Endothelial cell of umbilical vein (primary cell): ENCODE measurements at regions of chr4 and their contacts with region 1.

Region 1: GRCh38 chr4:15396157-15396800 is 31.6 kb upstream of the C1QTNF7 start:
- DNase-seq: peak; percentile 45
- H3K4me3 ChIP-seq: no peak overlapping the region
- H3K27ac ChIP-seq: no peak overlapping the region
- H3K4me1 ChIP-seq: no peaks in the 10 kb centered on the region
- H3K27me3 ChIP-seq: no peaks in the 10 kb centered on the region
- CTCF ChIP-seq: peak; percentile 50 to 67
- POLR2A ChIP-seq: no peak

Region 2: DNA sequence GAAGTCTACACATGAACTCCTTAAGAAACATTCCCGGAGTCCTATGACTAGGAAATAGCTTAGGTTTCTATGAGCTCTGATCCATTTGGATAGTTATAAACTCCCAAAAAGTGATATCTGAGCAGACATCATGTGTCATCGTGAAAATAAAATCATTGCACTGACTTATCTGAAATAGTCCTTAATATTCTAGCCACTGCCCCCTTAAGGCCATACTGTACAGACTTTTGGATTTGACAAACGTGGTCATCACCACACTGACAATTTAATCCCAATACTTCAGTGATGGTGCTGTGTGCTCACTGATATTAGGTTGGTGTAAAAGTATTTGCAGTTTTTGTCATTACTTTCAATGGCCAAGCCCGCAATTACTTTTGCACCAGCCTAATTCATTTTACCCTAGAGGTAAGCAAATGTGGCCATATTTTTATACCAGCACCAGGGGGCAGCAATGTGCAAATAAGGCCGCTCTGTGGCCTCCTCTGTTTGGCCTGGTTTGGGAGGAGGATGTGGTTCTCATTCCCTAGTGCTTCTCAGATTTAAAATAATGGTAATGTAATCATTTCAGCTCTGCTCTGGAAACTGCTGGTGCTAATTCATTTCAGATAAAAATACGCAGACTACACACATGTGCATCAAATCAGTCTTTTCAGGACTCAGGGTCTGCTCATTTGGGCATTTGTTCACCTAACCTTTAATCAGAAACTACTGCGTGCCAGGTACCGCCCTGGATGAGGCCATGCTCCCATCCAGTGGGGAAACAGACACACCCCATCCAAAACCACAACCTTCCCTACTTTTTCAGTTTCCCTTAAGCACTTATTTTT is 164.8 kb before region 1 on chr4:
- CTCF ChIA-PET with region 1: interaction called, 13 read pairs
- POLR2A ChIA-PET with region 1: no interaction called
- dilution Hi-C with region 1: no loop called
- intact Hi-C with region 1: loop called (anchors 2 kb)
- DNase-seq: peak; percentile 62
- H3K4me3 ChIP-seq: no peak overlapping the region
- H3K27ac ChIP-seq: no peak overlapping the region
- H3K4me1 ChIP-seq: no peaks in the 10 kb centered on the region
- H3K27me3 ChIP-seq: no peaks in the 10 kb centered on the region
- CTCF ChIP-seq: peak; percentile 60 to 61
- POLR2A ChIP-seq: no peak

Region 3: GRCh38 chr4:15238720-15239119 is 157.6 kb before region 1 on chr4:
- CTCF ChIA-PET with region 1: interaction called, 13 read pairs
- POLR2A ChIA-PET with region 1: no interaction called
- dilution Hi-C with region 1: no loop called
- intact Hi-C with region 1: loop called (anchors 2 kb)
- DNase-seq: peak; percentile 11
- H3K4me3 ChIP-seq: no peak overlapping the region
- H3K27ac ChIP-seq: no peak overlapping the region
- H3K4me1 ChIP-seq: no peaks in the 10 kb centered on the region
- H3K27me3 ChIP-seq: no peaks in the 10 kb centered on the region
- CTCF ChIP-seq: peak; percentile 22 to 26
- POLR2A ChIP-seq: no peak

Region 4: GRCh38 chr4:15378062-15378461 is 18.2 kb before region 1 on chr4:
- CTCF ChIA-PET with region 1: interaction called, 11 read pairs
- POLR2A ChIA-PET with region 1: no interaction called
- dilution Hi-C with region 1: no loop called
- intact Hi-C with region 1: no loop called
- DNase-seq: no peak
- H3K4me3 ChIP-seq: no peak overlapping the region
- H3K27ac ChIP-seq: no peak overlapping the region
- H3K4me1 ChIP-seq: no peaks in the 10 kb centered on the region
- H3K27me3 ChIP-seq: no peaks in the 10 kb centered on the region
- CTCF ChIP-seq: no peak
- POLR2A ChIP-seq: no peak

Region 5: GRCh38 chr4:15385928-15386327 is 10.4 kb before region 1 on chr4:
- CTCF ChIA-PET with region 1: interaction called, 17 read pairs
- POLR2A ChIA-PET with region 1: no interaction called
- dilution Hi-C with region 1: no loop called
- intact Hi-C with region 1: no loop called
- DNase-seq: no peak
- H3K4me3 ChIP-seq: no peak overlapping the region
- H3K27ac ChIP-seq: no peak overlapping the region
- H3K4me1 ChIP-seq: no peaks in the 10 kb centered on the region
- H3K27me3 ChIP-seq: no peaks in the 10 kb centered on the region
- CTCF ChIP-seq: no peak
- POLR2A ChIP-seq: no peak

Region 6: GRCh38 chr4:15410750-15411149 is 14.5 kb after region 1 on chr4:
- CTCF ChIA-PET with region 1: interaction called, 23 read pairs
- POLR2A ChIA-PET with region 1: no interaction called
- dilution Hi-C with region 1: no loop called
- intact Hi-C with region 1: no loop called
- DNase-seq: peak; percentile 26
- H3K4me3 ChIP-seq: no peak overlapping the region
- H3K27ac ChIP-seq: no peak overlapping the region
- H3K4me1 ChIP-seq: peaks cover 3% of the 10 kb centered on the region
- H3K27me3 ChIP-seq: no peaks in the 10 kb centered on the region
- CTCF ChIP-seq: no peak
- POLR2A ChIP-seq: no peak